ENCODE measurements at regions of chr12 and their contacts with region 1.

Region 1: DNA sequence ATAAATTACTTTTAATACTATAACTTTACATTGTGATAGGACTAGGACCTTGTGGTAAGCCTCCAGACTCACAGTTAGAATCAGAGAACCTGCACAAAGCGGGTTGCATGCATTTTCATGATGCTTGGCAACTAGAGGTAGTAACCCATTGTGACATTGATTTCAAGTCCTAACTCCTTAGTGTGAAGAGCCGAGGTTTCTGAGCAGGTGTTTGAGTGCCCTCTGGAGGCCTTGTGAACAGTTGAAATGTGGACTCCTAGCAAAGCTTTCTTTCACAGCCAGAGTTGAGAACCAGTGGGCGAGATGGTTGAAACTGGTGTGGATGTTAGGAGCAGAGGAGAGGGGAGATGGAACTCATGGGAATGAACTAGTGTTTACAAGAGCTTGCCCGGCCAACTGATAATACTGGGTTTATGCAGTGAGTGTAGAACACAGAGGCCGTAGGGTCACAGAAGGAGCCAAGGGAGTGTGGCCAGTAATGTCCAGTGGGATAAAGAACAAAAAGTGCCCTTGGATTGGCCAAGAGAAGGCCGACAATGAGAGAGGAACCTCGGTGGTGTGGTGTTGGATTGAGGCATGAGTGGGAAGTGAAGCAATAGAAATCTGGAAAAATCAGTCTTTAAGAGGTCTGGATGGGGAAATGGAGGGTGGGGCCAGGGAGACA is 10.9 kb downstream of the ZNF664 start:
- DNase-seq: peak; percentile 36
- CTCF ChIP-seq: peak; percentile 80

Region 2: DNA sequence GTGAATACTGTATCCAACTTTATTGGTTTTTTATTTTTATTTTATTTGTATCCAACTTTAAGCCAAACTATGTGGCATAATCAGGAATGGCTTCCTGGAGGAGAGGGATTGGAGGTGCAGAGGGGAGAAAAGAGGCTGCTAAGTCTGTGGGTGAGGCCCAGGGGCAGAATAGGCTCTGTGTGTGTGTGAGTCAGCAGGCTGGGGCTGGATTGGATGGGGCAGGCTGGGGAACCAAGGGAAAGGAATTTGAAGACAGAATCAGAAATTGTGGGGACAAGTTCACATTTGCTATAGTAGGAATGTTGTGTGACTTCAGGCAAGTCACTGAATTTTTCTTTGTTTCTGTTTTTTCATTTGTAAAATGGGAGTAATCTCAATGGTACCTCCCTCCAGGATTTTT is 437.7 kb before region 1 on chr12:
- in situ Hi-C with region 1: no loop called
- DNase-seq: no peak
- CTCF ChIP-seq: no peak

Region 3: DNA sequence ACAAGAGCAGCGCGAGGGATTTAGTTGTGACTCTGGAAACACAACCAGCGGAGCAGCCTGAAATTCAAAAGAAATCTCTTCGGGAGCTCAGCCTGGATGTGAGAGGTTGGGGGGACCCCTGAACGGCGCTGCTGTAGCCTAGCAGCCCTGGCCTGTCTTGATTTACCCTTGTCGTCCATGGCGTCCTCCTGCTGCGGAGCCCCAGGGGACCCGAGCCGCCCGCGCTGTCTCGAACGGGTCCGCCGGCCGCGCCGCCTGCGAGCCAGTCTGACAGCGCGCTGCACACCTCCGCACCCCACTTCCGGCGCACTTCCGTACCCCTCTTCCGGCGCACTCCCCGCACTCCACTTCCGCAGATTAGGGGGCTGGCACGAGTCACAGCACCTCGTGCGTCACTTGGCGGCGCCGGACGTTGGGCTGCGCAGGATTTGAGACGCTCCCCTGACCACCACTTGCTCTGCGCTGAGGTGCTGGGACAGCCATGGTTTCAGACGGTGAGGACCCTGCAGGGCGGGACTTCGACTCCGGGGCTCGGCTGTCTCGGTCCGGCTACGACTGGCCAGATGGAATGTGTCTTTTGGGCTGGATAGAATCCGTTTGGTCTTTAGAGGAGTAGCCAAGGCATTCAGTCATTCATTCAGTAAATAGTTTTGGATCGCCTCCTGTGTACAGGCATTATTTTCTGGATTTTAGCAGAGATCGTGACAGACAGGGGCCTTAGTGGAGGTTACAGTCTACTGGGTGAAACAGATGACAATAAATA is 350.4 kb before region 1 on chr12 and contains the starts of genes EIF2B1 and GTF2H3:
- in situ Hi-C with region 1: loop called (anchors 25 kb)
- DNase-seq: peak; percentile 98
- CTCF ChIP-seq: no peak

Measured in GM13977 (cell line).